B cell (primary cell): ENCODE measurements at regions of chr2 and their contacts with region 1.

Region 1: GRCh38 chr2:55223958-55224760 is 7.9 kb downstream of the CLHC1 start:
- DNase-seq: peak; percentile 50
- ATAC-seq: no peak
- H3K4me3 ChIP-seq: peak overlapping the region in 4 of 5 experiments; percentile 54 to 73 (median 68)
- H3K4me3 Mint-ChIP-seq: peak overlapping the region; percentile 83
- H3K27ac ChIP-seq: peak overlapping the region; percentile 77 to 86
- H3K27ac Mint-ChIP-seq: peak overlapping the region; percentile 90
- H3K4me1 ChIP-seq: peaks cover 16 to 24% of the 10 kb centered on the region in 2 donors
- H3K4me1 Mint-ChIP-seq: peaks cover 26% of the 10 kb centered on the region
- H3K27me3 ChIP-seq: no peaks in the 10 kb centered on the region
- H3K27me3 Mint-ChIP-seq: no peaks in the 10 kb centered on the region
- CTCF ChIP-seq: no peak

Region 2: GRCh38 chr2:55093381-55093780 is 130.8 kb before region 1 on chr2:
- CTCF ChIA-PET with region 1: no interaction called
- POLR2A ChIA-PET with region 1: no interaction called
- intact Hi-C with region 1: no loop called
- DNase-seq: no peak
- ATAC-seq: no peak
- H3K4me3 ChIP-seq: no peak overlapping the region
- H3K4me3 Mint-ChIP-seq: no peak overlapping the region
- H3K27ac ChIP-seq: no peak overlapping the region
- H3K27ac Mint-ChIP-seq: no peak overlapping the region
- H3K4me1 ChIP-seq: no peaks in the 10 kb centered on the region
- H3K4me1 Mint-ChIP-seq: no peaks in the 10 kb centered on the region
- H3K27me3 ChIP-seq: no peaks in the 10 kb centered on the region
- H3K27me3 Mint-ChIP-seq: peaks cover 3% of the 10 kb centered on the region
- CTCF ChIP-seq: no peak

Region 3: DNA sequence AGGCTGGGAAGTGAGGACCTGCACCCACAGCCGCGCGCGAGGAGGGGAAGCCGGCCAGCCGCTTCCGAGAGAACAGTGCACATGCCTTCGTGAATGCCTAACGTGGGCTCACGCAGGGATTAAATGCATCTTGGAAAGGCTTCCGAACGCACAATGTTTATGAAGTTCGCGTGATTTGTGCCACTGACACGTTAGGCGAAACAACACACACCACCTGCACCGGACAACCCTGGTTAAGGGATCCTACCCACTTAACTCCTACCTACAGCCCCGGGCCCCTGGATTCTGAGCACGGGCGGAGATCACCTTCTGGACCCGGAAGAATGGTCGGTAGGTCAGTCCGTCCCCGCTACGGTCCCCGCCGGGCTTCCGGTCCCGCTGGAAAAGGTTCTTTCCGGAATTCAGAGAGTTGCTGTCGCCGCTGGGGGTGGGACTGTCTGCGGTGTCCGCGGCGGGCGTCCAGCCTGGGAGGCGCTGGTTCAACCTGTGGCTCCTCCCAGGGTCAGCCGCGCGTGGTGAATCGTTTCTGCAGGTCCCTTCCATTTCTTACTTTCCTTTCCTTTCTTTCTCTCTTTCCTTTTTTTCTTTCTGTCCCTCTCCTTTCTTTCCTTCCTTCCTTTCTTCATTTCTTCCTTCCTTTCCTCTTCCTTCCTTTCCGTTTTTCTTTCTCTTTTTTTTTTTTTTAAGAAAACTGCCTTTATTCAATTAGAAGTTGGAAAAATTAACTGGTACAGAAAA is 44.9 kb after region 1 on chr2 and contains the start of gene MTIF2:
- CTCF ChIA-PET with region 1: no interaction called
- POLR2A ChIA-PET with region 1: no interaction called
- intact Hi-C with region 1: loop called (anchors 2 kb)
- DNase-seq: peak; percentile 91
- ATAC-seq: peak; percentile 90
- H3K4me3 ChIP-seq: peak within 1 kb of the TSS; percentile 70 to 92 (median 82)
- H3K4me3 Mint-ChIP-seq: peak within 1 kb of the TSS; percentile 97
- H3K27ac ChIP-seq: peak within 1 kb of the TSS; percentile 78 to 83
- H3K27ac Mint-ChIP-seq: peak within 1 kb of the TSS; percentile 95
- H3K4me1 ChIP-seq: peaks cover 12 to 14% of the 10 kb centered on the region in 2 donors
- H3K4me1 Mint-ChIP-seq: peaks cover 18% of the 10 kb centered on the region
- H3K27me3 ChIP-seq: no peaks in the 10 kb centered on the region
- H3K27me3 Mint-ChIP-seq: no peaks in the 10 kb centered on the region
- CTCF ChIP-seq: no peak
- total RNA-seq, gene MTIF2: 36.7 and 37.4 TPM in 2 replicates

Region 4: DNA sequence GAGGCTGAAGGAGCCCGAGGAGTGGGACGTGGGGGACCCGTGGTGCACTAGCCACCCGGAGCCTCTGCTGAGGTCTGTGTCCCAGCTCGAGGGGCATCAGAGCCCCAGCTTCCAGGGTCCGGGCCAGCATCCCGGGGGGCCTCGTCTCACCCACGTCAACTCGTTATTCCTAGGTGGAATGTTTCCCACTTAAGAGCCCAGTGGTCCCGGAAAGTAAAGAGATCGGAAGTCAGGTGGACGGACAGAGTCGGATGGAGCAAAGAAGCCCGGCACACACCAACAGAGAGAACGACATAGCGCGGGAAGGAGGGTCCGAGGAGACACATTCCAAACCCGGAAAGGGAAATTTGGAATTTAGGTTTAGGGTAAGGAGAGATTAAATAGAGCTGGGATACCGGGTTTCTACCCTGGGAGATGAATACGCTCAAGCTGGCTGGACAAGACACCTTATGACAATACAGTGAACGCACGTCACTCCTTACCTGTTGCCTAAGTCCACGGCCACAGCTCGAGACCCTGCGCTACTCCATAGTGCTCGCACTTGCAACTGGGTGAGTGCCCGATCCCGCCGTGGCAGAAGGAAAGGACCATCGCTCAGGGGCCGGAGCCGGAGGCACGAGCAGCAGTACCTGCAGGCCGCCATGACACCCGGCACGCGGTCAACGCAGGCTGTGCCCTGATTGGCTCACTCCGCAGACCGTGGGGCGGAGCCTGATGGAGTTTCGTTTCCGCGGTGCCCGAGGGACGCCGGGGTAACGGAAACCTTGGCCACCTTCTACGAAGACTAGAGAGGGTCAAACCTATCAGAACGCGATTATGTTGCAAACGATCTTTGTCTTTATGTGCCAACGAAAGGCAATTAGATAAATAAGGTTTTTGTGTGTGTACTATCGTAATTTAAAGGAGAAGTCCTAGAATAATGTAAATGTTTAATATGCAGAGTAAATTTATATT is 469.3 kb after region 1 on chr2 and contains the start of gene PNPT1:
- CTCF ChIA-PET with region 1: no interaction called
- POLR2A ChIA-PET with region 1: no interaction called
- intact Hi-C with region 1: loop called (anchors 10 kb)
- DNase-seq: peak; percentile 92
- ATAC-seq: peak; percentile 100
- H3K4me3 ChIP-seq: peak within 1 kb of the TSS; percentile 75 to 97 (median 78)
- H3K4me3 Mint-ChIP-seq: peak within 1 kb of the TSS; percentile 99
- H3K27ac ChIP-seq: peak within 1 kb of the TSS; percentile 8 to 66
- H3K27ac Mint-ChIP-seq: peak within 1 kb of the TSS; percentile 90
- H3K4me1 ChIP-seq: peaks cover 9 to 13% of the 10 kb centered on the region in 2 donors
- H3K4me1 Mint-ChIP-seq: peaks cover 26% of the 10 kb centered on the region
- H3K27me3 ChIP-seq: no peaks in the 10 kb centered on the region
- H3K27me3 Mint-ChIP-seq: peaks cover 2% of the 10 kb centered on the region
- CTCF ChIP-seq: no peak
- total RNA-seq, gene PNPT1: 23.1 and 28.2 TPM in 2 replicates